Activated CD4-positive, alpha-beta T cell treated with anti-CD3 and anti-CD28 coated beads, Interleukin-2, amount 10 ng/mL, durations not matched to agents 24 days and 14 days (primary cell): ENCODE measurements at regions of chr12 and their contacts with region 1.

Region 1: DNA sequence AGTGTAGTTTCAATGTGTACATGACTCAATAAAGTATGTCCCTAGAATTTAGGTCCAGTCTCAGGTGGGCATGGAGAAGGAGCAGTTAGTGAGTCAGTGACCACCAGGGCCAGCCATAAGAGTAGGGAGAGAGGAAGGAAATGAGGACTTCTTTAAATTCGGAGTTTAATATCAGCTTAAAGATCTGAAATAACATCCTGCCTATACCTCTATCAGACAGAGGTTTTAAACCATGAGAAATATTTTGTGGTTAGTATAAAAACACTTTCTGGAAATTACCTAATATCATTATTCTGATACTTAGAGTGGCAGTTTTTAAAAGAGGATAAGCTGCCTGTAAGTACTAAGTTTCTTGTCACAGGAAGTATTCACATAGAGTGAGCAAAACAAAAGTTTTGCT is 61.7 kb upstream of the ST8SIA1 start:
- DNase-seq: no peak
- H3K4me3 Mint-ChIP-seq: no peak overlapping the region
- H3K27ac Mint-ChIP-seq: peak overlapping the region; percentile 49
- H3K4me1 Mint-ChIP-seq: peaks cover 17% of the 10 kb centered on the region
- H3K27me3 Mint-ChIP-seq: no peaks in the 10 kb centered on the region

Region 2: DNA sequence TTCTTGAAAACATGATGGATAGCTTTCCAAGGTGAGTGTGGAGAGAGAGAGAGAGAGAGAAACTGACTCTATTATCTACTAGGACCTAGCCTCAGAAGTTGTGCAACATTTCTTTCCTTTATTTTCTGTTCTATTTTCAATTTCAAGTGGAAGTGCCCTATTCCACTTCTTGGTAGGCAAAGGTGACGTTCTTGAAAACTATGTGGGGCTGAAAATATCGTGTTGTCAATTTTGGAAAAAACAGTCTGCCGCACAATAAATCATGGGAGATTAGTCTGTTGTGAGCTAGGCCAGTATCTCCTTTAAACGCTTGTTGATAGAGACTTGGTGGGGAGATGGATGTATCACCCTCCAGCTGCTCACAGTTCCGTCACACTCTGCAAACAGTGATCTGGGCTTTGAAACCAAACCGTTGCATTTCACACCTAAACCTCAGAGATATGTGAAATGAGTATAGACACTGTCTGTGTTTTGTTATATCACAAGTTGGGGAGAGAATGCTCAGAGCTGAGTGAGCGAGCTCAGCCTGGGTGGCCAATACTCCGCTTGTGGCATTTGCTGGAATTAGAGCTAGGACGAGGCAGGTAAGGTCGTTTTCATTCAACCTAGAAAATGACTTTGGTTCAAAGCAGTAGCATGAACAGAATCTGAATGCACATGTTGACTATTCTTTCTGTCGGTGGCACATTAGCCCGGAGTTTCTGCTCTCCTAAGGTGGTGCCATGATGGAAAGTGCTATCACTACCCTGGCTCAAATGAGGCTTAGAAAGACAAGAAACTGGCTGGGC is 13.3 kb after region 1 on chr12:
- intact Hi-C with region 1: loop called (anchors 1 kb)
- DNase-seq: peak; percentile 75
- H3K4me3 Mint-ChIP-seq: peak overlapping the region; percentile 45
- H3K27ac Mint-ChIP-seq: peak overlapping the region; percentile 54
- H3K4me1 Mint-ChIP-seq: peaks cover 15% of the 10 kb centered on the region
- H3K27me3 Mint-ChIP-seq: no peaks in the 10 kb centered on the region